ENCODE measurements at regions of chr11 and their contacts with region 1.

Region 1: DNA sequence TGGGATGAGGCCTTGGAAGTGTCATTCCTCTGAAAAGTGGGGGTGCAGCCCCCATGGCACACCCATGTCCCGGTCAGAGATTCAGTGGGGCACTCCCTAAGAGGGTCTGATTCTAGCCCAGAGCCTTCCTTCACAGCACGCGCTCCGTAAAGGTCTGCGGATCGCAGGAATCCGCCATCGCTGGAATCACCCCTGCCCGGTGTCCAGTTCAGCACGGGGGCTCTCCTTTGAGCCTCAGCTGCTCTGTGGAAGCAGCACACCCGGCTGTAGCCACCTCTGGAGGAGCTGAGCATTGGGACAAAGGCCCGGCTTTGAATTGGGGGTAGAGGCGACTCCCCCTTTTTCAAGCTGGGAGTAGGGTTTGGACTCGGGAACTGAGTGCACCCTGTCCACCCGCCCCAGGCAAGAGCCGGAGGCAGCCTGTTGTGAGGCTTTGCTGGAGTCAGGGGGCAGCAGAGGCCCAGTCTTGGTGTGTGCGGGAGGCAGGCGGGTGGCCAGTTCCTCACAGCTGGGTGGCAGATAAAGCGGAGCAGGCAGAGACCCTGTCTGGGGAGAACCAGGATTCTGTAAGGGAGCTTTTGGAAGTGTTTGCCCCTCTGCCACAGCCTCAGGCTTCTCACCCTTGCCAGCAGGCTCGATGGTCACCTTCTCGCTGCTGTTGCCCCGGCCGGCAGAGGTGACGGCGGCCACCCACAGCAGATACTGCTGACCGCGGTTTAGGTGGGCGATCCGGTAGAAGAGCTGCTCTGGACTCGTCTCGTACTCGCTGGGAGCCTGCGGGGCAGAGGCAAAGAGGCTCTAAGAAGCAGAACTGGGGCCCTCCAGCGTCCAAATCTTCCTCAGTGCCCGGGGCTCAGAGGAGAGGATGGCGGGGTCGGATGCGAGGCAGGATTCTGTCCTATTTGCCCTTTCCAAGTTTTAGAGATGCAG is 115.9 kb downstream of the CEP164 start:
- DNase-seq: peak; percentile 27 to 77
- H3K4me3 ChIP-seq: no peak overlapping the region
- H3K27ac ChIP-seq: no peak overlapping the region
- H3K4me1 ChIP-seq: peaks cover 0 to 8% (median 1%) of the 10 kb centered on the region in 4 experiments; a peak in 3 of 7 replicates
- H3K27me3 ChIP-seq: peaks cover 0 to 6% (median 0%) of the 10 kb centered on the region in 4 experiments; a peak in 4 of 7 replicates
- CTCF ChIP-seq: peak; percentile 86 to 92 (median 91)
- EP300 ChIP-seq: no peak
- POLR2A ChIP-seq: no peak
- RAD21 ChIP-seq: peak; percentile 95 to 98

Region 2: DNA sequence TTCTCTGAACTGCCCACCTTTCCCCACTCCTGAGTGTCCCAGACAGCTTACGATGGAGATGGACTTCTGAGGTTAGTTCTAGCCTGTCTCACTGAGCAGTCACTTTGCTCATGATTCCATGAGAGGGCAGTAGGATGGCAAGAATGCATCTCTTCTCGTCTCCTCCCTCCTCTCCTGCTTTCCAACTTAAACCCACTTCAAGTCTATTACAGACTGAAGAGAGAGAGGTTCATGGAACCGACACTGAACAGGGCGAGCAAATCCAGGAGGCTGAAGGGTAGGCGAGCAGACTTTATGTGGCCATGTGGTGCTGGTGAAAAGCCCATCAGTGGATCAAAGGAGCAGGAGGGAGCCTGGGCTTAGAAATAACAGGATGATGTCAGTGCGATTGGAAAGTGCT is 77.3 kb before region 1 on chr11:
- CTCF ChIA-PET with region 1: no interaction called
- POLR2A ChIA-PET with region 1: no interaction called
- DNase-seq: no peak
- H3K4me3 ChIP-seq: no peak overlapping the region
- H3K27ac ChIP-seq: no peak overlapping the region
- H3K4me1 ChIP-seq: no peaks in the 10 kb centered on the region
- H3K27me3 ChIP-seq: no peaks in the 10 kb centered on the region
- CTCF ChIP-seq: peak in 2 of 3 experiments; percentile 3; a peak in 1 of 4 replicates
- EP300 ChIP-seq: no peak
- POLR2A ChIP-seq: no peak
- RAD21 ChIP-seq: peak; percentile 15 to 32; a peak in 1 of 4 replicates

Region 3: DNA sequence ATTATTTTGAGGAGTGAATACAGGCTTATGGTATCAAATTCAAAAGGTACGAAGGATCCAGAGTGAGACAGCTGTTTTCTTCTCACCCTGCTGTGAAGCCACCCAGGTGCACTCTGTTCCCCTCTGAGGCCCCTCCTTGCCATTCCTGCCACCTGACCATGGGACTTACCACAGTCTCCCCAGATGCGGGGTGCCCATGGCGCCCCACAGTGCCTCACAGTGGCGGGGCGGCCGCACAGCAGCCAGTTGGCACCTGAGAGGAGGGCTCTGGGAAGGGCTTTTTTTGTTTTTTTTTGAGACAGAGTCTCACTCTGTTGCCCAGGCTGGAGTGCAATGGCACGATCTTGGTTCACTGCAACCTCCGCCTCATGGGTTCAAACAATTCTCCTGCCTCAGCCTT is 35.8 kb after region 1 on chr11:
- CTCF ChIA-PET with region 1: interaction called, 23 read pairs
- POLR2A ChIA-PET with region 1: no interaction called
- DNase-seq: peak in 1 of 2 experiments; percentile 71
- H3K4me3 ChIP-seq: no peak overlapping the region
- H3K27ac ChIP-seq: no peak overlapping the region
- H3K4me1 ChIP-seq: peaks cover 0 to 12% (median 6%) of the 10 kb centered on the region in 4 experiments; a peak in 6 of 7 replicates
- H3K27me3 ChIP-seq: no peaks in the 10 kb centered on the region; a peak in 1 of 7 replicates
- CTCF ChIP-seq: peak; percentile 60 to 67 (median 62)
- EP300 ChIP-seq: no peak
- POLR2A ChIP-seq: no peak
- RAD21 ChIP-seq: peak; percentile 48 to 64

Region 4: GRCh38 chr11:117497206-117497951 is 53.8 kb after region 1 on chr11:
- CTCF ChIA-PET with region 1: interaction called, 12 read pairs
- POLR2A ChIA-PET with region 1: interaction called, 4 read pairs
- DNase-seq: no peak
- H3K4me3 ChIP-seq: no peak overlapping the region
- H3K27ac ChIP-seq: no peak overlapping the region
- H3K4me1 ChIP-seq: peaks cover 2 to 17% (median 11%) of the 10 kb centered on the region in 4 experiments
- H3K27me3 ChIP-seq: peaks cover 0 to 5% (median 1%) of the 10 kb centered on the region in 4 experiments; a peak in 3 of 7 replicates
- CTCF ChIP-seq: no peak
- EP300 ChIP-seq: no peak
- POLR2A ChIP-seq: no peak
- RAD21 ChIP-seq: no peak

Region 5: DNA sequence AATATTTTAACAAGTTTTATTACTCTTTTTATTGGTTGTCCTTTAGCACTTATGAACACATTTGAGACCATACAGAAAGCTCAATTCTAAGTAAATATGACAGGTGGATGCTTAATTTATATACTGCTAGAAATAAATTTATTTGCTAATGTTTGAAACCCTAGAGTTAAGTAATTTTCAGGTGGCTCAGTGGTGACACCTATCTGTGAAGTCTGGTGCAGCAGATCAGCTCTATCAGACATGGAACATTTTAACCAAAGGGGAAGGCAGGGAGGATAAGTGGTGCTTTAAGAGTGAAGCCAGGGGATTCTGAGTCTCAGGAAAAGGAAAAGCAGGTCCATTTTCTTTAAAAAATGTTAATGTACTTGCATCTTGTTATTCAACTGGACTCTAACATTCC is 177.7 kb after region 1 on chr11:
- CTCF ChIA-PET with region 1: interaction called, 69 read pairs
- POLR2A ChIA-PET with region 1: no interaction called
- DNase-seq: no peak
- H3K4me3 ChIP-seq: no peak overlapping the region
- H3K27ac ChIP-seq: no peak overlapping the region
- H3K4me1 ChIP-seq: peaks cover 0 to 4% (median 2%) of the 10 kb centered on the region in 4 experiments; a peak in 4 of 7 replicates
- H3K27me3 ChIP-seq: no peaks in the 10 kb centered on the region
- CTCF ChIP-seq: peak; percentile 3 to 59 (median 41)
- EP300 ChIP-seq: no peak
- POLR2A ChIP-seq: no peak
- RAD21 ChIP-seq: peak; percentile 31 to 52; a peak in 3 of 4 replicates

Region 6: DNA sequence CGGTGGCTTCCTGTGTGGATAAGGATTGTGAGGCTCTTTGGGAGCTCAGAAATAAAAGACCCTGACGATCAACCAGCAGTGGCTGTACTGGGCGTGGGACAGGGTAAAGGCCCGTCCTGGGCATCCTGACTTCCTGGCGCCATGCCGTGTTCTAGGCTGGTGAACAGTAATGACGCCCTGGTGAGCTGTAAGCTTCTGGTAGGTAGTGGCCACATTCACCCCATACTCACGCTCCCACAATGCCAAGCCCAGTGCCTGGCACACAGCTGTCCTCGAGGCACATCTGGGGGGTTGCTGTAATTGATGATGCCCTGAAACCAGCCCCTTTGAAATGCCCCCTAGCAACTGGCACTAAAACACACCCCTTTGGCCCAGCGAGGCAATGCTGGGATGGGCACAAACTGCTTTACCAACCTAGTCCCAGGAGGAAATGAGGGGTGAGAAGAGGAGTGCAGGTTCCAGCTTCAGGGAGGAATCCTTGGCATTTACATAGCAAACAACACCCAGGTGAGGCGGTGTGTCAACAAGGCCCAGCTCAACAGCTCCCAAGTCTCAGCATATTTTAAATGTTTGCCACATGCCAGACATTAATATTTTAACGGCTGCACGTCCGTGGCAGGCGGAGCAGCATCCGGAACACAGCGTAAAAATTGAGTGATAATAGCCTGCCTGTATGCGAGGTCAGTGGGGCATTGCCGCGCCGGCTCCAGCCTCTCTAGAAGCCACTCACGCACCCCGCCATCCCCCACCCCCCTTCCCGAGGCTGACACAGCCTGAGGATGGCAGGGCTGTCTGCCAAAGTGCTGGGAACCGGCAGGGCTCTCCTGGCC is 274.2 kb after region 1 on chr11:
- CTCF ChIA-PET with region 1: interaction called, 12 read pairs
- POLR2A ChIA-PET with region 1: no interaction called
- DNase-seq: peak in 1 of 2 experiments; percentile 66
- H3K4me3 ChIP-seq: peak overlapping the region in 1 of 4 experiments; percentile 36; a peak in 1 of 8 replicates
- H3K27ac ChIP-seq: no peak overlapping the region
- H3K4me1 ChIP-seq: peaks cover 8 to 20% (median 13%) of the 10 kb centered on the region in 4 experiments
- H3K27me3 ChIP-seq: peaks cover 0 to 5% (median 2%) of the 10 kb centered on the region in 4 experiments; a peak in 3 of 7 replicates
- CTCF ChIP-seq: no peak
- EP300 ChIP-seq: no peak; a peak in 1 of 3 replicates
- POLR2A ChIP-seq: no peak
- RAD21 ChIP-seq: no peak; a peak in 1 of 4 replicates

Region 7: GRCh38 chr11:117817368-117818040 is 374.0 kb after region 1 on chr11:
- CTCF ChIA-PET with region 1: interaction called, 28 read pairs
- POLR2A ChIA-PET with region 1: no interaction called
- DNase-seq: peak; percentile 70 to 97
- H3K4me3 ChIP-seq: peak overlapping the region in 3 of 4 experiments; percentile 10 to 46 (median 29); a peak in 4 of 8 replicates
- H3K27ac ChIP-seq: no peak overlapping the region
- H3K4me1 ChIP-seq: peaks cover 0 to 31% (median 20%) of the 10 kb centered on the region in 4 experiments; a peak in 6 of 7 replicates
- H3K27me3 ChIP-seq: no peaks in the 10 kb centered on the region; a peak in 1 of 7 replicates
- CTCF ChIP-seq: peak in 2 of 3 experiments; percentile 87 to 96; a peak in 3 of 4 replicates
- EP300 ChIP-seq: no peak
- POLR2A ChIP-seq: no peak
- RAD21 ChIP-seq: peak; percentile 85 to 88